ENCODE measurements at regions of chr2 and their contacts with region 1.

Region 1: GRCh38 chr2:219206442-219207253 is at the start of gene ZFAND2B:
- DNase-seq: peak; percentile 91 to 99 (median 96)
- ATAC-seq: peak; percentile 88
- H3K4me3 ChIP-seq: peak within 1 kb of the TSS; percentile 63 to 68
- H3K4me3 Mint-ChIP-seq: peak within 1 kb of the TSS; percentile 95
- H3K27ac ChIP-seq: peak within 1 kb of the TSS; percentile 87 to 88
- H3K27ac Mint-ChIP-seq: peak within 1 kb of the TSS; percentile 99
- H3K4me1 ChIP-seq: peaks cover 48% of the 10 kb centered on the region
- H3K4me1 Mint-ChIP-seq: peaks cover 46% of the 10 kb centered on the region
- H3K27me3 ChIP-seq: no peaks in the 10 kb centered on the region
- H3K27me3 Mint-ChIP-seq: no peaks in the 10 kb centered on the region
- CTCF ChIP-seq: no peak
- total RNA-seq, gene ZFAND2B: 74.3 to 78.7 TPM

Region 2: DNA sequence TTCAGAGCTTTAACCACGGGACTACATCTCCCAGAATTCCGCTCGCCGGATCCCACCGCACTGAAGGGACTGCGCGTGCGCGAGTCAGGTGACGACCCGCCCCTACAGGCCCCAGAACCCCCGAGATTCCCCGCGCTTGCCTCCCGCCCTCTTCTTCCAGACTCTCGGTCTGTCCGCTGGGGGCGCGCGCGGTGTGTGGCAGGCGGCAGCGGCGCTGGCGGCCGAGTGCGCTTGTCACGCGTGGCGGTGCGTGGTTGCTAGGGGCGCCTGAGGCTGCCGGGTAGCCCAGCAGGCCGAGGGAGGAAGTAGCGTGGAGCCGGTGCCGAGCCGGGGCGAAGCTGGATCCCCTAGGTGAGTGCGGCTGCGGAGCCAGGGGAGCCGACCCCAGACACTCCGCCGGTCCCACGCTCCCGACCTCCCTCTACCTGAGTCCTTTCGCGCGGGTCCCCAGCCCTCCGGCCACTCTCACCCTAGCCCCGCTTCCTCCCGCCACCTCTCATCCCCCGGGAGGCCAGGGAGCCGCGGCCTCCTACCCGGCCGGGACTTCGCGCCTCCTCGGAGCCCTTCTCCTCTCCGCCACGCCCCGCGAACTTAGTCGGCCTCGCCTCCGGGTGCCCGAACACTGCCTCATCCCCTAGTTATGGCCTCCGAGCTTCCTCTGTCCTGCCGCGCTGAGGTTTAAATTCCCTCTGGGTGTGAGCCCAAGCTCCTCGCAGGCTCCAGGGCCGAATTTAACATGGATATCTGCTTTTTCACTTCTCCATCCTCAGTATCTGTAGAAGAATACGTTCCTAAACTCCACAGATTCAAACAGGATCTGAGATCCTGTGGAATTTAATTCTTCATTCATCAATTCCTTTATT is 495.7 kb before region 1 on chr2 and contains the start of gene TTLL4:
- CTCF ChIA-PET with region 1: no interaction called
- POLR2A ChIA-PET with region 1: no interaction called
- intact Hi-C with region 1: loop called in 1 of 2 experiments (anchors 10 kb)
- DNase-seq: peak; percentile 97 to 99 (median 99)
- ATAC-seq: peak; percentile 99
- H3K4me3 ChIP-seq: peak within 1 kb of the TSS; percentile 86 to 92
- H3K4me3 Mint-ChIP-seq: peak within 1 kb of the TSS; percentile 91
- H3K27ac ChIP-seq: peak within 1 kb of the TSS; percentile 73 to 90
- H3K27ac Mint-ChIP-seq: peak within 1 kb of the TSS; percentile 84
- H3K4me1 ChIP-seq: peaks cover 13% of the 10 kb centered on the region
- H3K4me1 Mint-ChIP-seq: peaks cover 19% of the 10 kb centered on the region
- H3K27me3 ChIP-seq: no peaks in the 10 kb centered on the region
- H3K27me3 Mint-ChIP-seq: peaks cover 6% of the 10 kb centered on the region
- CTCF ChIP-seq: peak; percentile 76
- total RNA-seq, gene TTLL4: 6.9 to 8.1 TPM

Region 3: GRCh38 chr2:219002395-219003266 is 204.0 kb before region 1 on chr2:
- CTCF ChIA-PET with region 1: no interaction called
- POLR2A ChIA-PET with region 1: no interaction called
- intact Hi-C with region 1: no loop called
- DNase-seq: peak in 5 of 9 experiments; percentile 40 to 67 (median 56)
- ATAC-seq: peak; percentile 69
- H3K4me3 ChIP-seq: peak overlapping the region; percentile 15 to 41
- H3K4me3 Mint-ChIP-seq: peak overlapping the region; percentile 79
- H3K27ac ChIP-seq: no peak overlapping the region
- H3K27ac Mint-ChIP-seq: no peak overlapping the region
- H3K4me1 ChIP-seq: peaks cover 25% of the 10 kb centered on the region
- H3K4me1 Mint-ChIP-seq: peaks cover 15% of the 10 kb centered on the region
- H3K27me3 ChIP-seq: peaks cover 26 to 34% of the 10 kb centered on the region in 2 experiments
- H3K27me3 Mint-ChIP-seq: peaks cover 64% of the 10 kb centered on the region
- CTCF ChIP-seq: peak; percentile 48

Region 4: DNA sequence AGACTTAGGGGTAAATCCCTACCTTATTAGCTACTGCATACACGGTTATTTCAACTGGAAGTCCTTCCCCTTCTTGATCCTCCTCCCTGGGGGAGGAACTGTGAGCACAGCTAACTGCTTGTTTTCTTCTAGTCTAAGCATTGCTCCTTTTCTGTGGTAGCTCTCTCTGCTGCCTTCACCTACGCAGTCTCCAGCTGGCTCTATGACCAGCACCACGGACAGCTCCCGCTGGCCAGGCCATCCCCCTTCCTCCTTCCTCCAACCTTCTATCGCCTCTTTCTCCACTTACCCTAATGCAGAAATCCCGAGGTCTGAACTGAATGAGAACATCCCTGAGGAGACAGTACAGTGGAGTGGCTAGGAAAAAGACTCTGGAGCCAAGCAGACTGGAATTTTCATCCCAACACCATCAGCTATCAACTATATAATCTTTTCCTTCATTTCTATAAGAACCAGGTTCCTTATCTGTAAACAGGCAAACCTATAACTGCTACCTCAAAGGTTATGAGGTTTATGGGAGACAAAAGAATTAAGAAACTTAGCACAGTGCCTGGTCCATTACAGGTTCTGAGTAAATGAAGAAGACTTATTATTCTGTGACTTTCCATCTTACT is 160.6 kb before region 1 on chr2:
- CTCF ChIA-PET with region 1: no interaction called
- POLR2A ChIA-PET with region 1: no interaction called
- intact Hi-C with region 1: no loop called
- DNase-seq: no peak
- ATAC-seq: no peak
- H3K4me3 ChIP-seq: no peak overlapping the region
- H3K4me3 Mint-ChIP-seq: no peak overlapping the region
- H3K27ac ChIP-seq: no peak overlapping the region
- H3K27ac Mint-ChIP-seq: no peak overlapping the region
- H3K4me1 ChIP-seq: peaks cover 3% of the 10 kb centered on the region
- H3K4me1 Mint-ChIP-seq: peaks cover 7% of the 10 kb centered on the region
- H3K27me3 ChIP-seq: peaks cover 7 to 20% of the 10 kb centered on the region in 2 experiments
- H3K27me3 Mint-ChIP-seq: peaks cover 66% of the 10 kb centered on the region
- CTCF ChIP-seq: no peak

Region 5: DNA sequence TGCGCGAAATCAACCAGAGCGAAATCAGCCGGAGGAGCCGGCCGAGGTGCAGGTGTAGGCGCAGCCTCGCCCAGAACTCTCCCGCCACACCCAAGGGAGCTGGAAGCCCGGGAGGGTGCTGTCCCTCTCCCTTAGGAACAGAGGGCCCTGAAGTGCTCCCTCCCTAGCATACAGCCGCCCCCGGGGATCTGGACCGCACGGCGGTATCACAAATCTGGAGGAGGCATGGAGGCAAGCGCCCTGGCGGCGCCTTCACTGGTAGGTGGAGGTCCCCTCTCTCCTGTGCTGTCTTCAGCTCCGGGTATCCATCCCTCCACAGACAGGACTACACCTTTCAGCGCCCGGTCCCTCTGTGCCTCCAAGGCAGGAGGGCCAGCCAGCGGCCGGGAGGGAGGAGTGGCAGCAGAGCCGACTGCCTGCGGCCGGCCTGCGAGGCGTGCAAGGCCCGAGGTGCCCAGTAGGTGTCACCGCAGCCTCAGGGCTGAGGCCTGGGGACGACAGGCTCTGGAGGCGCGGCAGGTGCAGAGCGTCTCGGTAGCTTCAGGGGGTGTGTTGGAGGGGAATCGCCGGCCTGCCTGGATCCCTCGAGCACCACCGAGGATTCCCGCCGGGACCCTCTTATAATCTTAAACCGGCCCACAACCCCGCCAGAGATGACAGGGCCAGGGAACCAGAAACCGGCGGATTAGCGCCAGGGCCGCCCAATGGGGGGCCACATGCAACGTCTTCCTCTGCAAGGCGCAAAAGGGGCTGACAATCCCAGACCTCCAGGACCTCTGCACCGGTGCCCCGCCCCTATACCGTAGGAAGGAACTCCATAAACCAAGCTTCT is 148.7 kb before region 1 on chr2:
- CTCF ChIA-PET with region 1: no interaction called
- POLR2A ChIA-PET with region 1: no interaction called
- intact Hi-C with region 1: loop called (anchors 1 to 2 kb)
- DNase-seq: peak; percentile 62 to 85 (median 74)
- ATAC-seq: peak; percentile 96
- H3K4me3 ChIP-seq: no peak overlapping the region
- H3K4me3 Mint-ChIP-seq: peak overlapping the region; percentile 55
- H3K27ac ChIP-seq: no peak overlapping the region
- H3K27ac Mint-ChIP-seq: no peak overlapping the region
- H3K4me1 ChIP-seq: peaks cover 35% of the 10 kb centered on the region
- H3K4me1 Mint-ChIP-seq: peaks cover 26% of the 10 kb centered on the region
- H3K27me3 ChIP-seq: peaks cover 26 to 37% of the 10 kb centered on the region in 2 experiments
- H3K27me3 Mint-ChIP-seq: peaks cover 58% of the 10 kb centered on the region
- CTCF ChIP-seq: peak; percentile 92

Region 6: DNA sequence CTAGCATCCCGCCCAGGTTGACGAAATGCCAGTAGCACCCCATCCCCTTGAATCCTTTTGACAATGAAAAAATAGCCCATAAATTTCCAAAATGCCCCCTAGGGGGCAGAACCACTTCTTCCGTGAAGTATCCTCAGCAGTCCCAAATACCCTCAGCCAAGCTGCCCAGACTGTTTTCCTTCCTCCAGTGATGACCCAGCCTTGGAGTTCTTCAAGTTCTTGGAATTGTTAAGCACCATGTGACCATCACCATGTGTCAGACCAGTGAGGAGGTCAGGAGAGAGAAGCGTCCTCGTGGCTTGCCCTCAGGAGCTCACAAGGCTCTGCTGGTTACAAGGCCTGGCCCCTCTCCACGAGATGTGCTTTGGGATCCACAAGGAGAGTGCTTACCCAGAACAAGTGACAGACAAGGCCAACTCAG is 35.4 kb before region 1 on chr2:
- CTCF ChIA-PET with region 1: interaction called, 215 read pairs
- POLR2A ChIA-PET with region 1: interaction called, 95 read pairs
- intact Hi-C with region 1: loop called (anchors 1 to 2 kb)
- DNase-seq: peak in 5 of 9 experiments; percentile 43 to 69 (median 55)
- ATAC-seq: peak; percentile 76
- H3K4me3 ChIP-seq: no peak overlapping the region
- H3K4me3 Mint-ChIP-seq: no peak overlapping the region
- H3K27ac ChIP-seq: peak overlapping the region in 1 of 2 experiments; percentile 13
- H3K27ac Mint-ChIP-seq: no peak overlapping the region
- H3K4me1 ChIP-seq: peaks cover 24% of the 10 kb centered on the region
- H3K4me1 Mint-ChIP-seq: peaks cover 28% of the 10 kb centered on the region
- H3K27me3 ChIP-seq: no peaks in the 10 kb centered on the region
- H3K27me3 Mint-ChIP-seq: no peaks in the 10 kb centered on the region
- CTCF ChIP-seq: peak; percentile 79

Region 7: DNA sequence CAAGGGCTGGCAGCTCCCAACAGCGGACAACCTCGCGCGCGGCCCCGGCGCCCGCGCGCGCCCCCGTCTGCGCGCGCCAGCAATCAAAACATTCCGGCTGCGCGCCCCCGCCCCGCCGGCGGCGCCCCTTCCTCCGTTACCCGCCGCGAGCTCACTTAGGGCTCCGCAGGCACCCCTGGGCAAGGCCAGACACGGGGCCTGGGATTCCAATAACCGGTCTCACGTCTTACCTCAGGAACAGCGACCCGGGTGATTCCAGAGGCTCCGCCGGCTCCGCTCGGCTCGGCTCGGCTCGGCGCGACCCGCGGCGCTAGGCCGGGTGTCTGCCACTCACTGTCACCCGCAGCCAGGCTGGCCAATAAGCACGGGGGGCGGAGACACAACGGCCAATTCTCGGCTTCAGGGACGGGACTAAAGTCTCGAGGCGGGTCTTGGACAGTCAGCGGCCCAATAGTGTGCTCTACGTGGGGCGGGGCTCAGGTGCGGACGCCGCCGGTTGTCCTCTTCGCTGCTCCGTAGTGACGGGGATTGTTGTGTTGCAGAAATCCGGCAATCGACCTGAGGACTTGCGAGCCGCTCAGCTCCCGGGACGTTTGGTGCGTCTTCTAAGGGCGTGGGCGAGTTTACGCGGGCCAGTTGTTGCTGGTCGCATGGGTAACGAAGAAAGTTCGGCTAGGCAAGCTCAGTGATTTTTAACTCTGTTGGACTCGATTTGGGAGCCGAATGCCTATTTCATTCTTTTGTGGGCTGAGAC is 22.8 kb after region 1 on chr2 and contains the starts of genes ANKZF1 and ATG9A:
- CTCF ChIA-PET with region 1: interaction called, 15 read pairs
- POLR2A ChIA-PET with region 1: interaction called, 12 read pairs
- intact Hi-C with region 1: loop called in 1 of 2 experiments (anchors 1 kb)
- DNase-seq: peak; percentile 95 to 99 (median 98)
- ATAC-seq: peak; percentile 96
- H3K4me3 ChIP-seq: peak within 1 kb of the TSS; percentile 83 to 93
- H3K4me3 Mint-ChIP-seq: peak within 1 kb of the TSS; percentile 99
- H3K27ac ChIP-seq: peak within 1 kb of the TSS; percentile 79 to 95
- H3K27ac Mint-ChIP-seq: peak within 1 kb of the TSS; percentile 98
- H3K4me1 ChIP-seq: peaks cover 39% of the 10 kb centered on the region
- H3K4me1 Mint-ChIP-seq: peaks cover 58% of the 10 kb centered on the region
- H3K27me3 ChIP-seq: no peaks in the 10 kb centered on the region
- H3K27me3 Mint-ChIP-seq: no peaks in the 10 kb centered on the region
- CTCF ChIP-seq: no peak
- total RNA-seq, gene ANKZF1: 97.4 to 99.5 TPM
- total RNA-seq, gene ATG9A: 103 to 116 TPM

Region 8: GRCh38 chr2:219245148-219245898 is 38.7 kb after region 1 on chr2 and contains the starts of genes GLB1L and STK16:
- CTCF ChIA-PET with region 1: interaction called, 10 read pairs
- POLR2A ChIA-PET with region 1: interaction called, 25 read pairs
- intact Hi-C with region 1: no loop called
- DNase-seq: peak; percentile 67 to 94 (median 87)
- ATAC-seq: peak; percentile 37
- H3K4me3 ChIP-seq: peak within 1 kb of the TSS; percentile 68 to 94
- H3K4me3 Mint-ChIP-seq: peak within 1 kb of the TSS; percentile 94
- H3K27ac ChIP-seq: peak within 1 kb of the TSS; percentile 89 to 96
- H3K27ac Mint-ChIP-seq: peak within 1 kb of the TSS; percentile 99
- H3K4me1 ChIP-seq: peaks cover 58% of the 10 kb centered on the region
- H3K4me1 Mint-ChIP-seq: peaks cover 68% of the 10 kb centered on the region
- H3K27me3 ChIP-seq: no peaks in the 10 kb centered on the region
- H3K27me3 Mint-ChIP-seq: no peaks in the 10 kb centered on the region
- CTCF ChIP-seq: no peak
- total RNA-seq, gene GLB1L: 1.7 to 2.8 TPM
- total RNA-seq, gene STK16: 12.9 to 13.2 TPM

Region 9: DNA sequence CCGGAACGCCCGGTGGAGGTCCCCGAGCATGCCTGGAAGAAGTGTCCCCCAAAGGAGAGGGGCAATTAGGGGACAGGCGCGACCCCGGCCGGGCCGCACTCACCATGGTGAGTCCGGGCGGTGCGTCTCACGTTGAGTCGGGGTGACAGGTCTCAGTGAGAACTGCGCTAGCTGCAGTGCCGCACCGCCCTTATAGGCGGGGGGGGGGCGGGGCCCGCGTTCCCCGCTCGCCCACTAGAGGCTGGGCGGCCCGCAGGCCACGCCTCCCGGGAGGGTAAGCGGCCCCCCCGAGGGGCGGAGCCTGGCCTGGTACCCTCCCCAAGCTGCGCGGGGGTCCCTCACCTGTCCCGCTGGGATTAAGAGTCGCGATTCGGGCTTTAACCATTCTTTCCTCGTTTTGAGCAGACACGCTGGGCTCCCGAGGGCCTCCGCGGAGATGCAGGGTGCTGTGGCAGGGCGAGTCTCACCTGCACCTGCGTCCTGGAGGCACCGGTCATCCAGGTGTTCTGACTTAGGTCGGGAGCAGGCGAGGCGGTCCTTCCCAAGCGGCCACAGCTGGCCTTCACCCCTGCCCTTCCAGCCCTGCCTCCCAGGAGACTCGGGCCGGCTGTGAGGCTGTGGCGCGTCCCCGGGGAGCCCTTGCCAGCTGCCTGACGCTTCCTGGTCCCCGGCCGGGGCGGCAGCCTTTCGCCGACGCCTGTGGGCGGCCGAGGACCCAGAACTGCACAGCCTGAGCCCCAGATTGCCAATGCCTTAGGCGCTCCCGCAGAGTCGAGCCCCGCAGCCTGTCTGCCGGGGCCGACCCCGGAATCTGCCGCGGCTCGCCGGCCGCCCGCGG is 47.3 kb after region 1 on chr2 and contains the start of gene TUBA4A:
- CTCF ChIA-PET with region 1: interaction called, 10 read pairs
- POLR2A ChIA-PET with region 1: interaction called, 25 read pairs
- intact Hi-C with region 1: loop called (anchors 1 kb)
- DNase-seq: peak; percentile 82 to 95 (median 91)
- ATAC-seq: peak; percentile 74
- H3K4me3 ChIP-seq: peak within 1 kb of the TSS; percentile 98 to 100
- H3K4me3 Mint-ChIP-seq: peak within 1 kb of the TSS; percentile 87
- H3K27ac ChIP-seq: peak within 1 kb of the TSS; percentile 81 to 93
- H3K27ac Mint-ChIP-seq: peak within 1 kb of the TSS; percentile 96
- H3K4me1 ChIP-seq: peaks cover 37% of the 10 kb centered on the region
- H3K4me1 Mint-ChIP-seq: peaks cover 46% of the 10 kb centered on the region
- H3K27me3 ChIP-seq: no peaks in the 10 kb centered on the region
- H3K27me3 Mint-ChIP-seq: no peaks in the 10 kb centered on the region
- CTCF ChIP-seq: no peak
- total RNA-seq, gene TUBA4A: 322 TPM